AG04449 (cell line): ENCODE measurements at regions of chrX and their contacts with region 1.

Region 1: DNA sequence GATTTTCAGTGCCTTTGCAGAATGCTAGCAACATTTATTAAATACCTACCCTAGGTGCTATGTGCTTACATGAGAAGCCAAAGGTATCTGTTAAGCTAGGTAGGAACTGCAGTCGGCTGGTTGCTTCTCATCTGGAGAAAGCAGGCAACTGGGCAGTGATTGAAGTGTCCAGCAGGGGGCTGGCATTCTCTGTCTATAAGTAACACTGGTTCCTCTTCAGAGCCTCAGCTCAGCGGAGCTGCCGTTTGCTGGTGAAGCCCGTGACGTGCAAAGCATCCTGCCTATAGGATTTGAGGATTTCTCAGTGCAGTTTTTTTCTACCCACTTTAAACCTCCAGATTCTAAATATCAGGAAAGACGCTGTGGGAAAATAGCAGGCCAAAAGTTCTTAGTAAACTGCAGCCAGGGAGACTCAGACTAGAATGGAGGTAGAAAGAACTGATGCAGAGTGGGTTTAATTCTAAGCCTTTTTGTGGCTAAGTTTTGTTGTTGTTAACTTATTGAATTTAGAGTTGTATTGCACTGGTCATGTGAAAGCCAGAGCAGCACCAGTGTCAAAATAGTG is at the start of gene GRPR:
- DNase-seq: peak; percentile 58
- H3K4me3 ChIP-seq: peak within 1 kb of the TSS; percentile 19
- CTCF ChIP-seq: peak; percentile 64

Region 2: DNA sequence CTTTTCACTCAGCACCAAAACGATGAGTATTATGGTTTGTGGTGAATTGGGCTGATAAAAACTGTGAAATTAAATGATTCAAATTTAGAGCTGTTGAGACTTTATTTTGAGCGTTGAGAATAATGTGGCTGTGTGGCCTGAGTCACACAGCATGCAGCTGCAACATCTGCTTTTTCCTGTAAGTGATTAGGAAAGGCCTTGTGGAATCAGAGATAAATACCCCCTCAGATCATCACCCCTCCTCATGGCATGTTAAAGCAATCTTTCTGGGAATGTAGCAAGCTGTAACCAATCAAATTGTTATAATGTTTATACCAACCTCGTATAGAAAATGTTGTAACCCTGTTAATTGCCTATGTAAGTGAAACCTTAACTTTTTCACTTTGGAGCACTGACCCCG is 90.0 kb before region 1 on chrX:
- CTCF ChIA-PET with region 1: no interaction called
- POLR2A ChIA-PET with region 1: no interaction called
- DNase-seq: peak; percentile 44
- H3K4me3 ChIP-seq: no peak overlapping the region
- CTCF ChIP-seq: no peak

Region 3: DNA sequence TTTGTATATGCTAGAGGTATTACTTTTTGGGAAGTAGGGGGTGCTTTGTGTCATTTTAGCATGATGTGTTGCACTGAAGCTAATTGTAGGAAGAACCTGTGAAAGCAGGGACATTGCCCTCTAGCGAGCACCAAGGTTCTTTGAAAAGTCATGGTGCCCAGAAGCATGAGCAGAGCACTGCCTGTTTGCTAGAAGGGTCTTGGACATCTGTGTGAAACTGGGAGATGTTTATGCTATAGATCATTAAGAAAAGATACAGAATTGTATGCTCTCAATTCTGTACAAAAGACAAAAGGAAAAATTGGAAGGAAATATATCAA is 14.8 kb after region 1 on chrX:
- CTCF ChIA-PET with region 1: interaction called, 17 read pairs
- POLR2A ChIA-PET with region 1: no interaction called
- DNase-seq: no peak
- H3K4me3 ChIP-seq: no peak overlapping the region
- CTCF ChIP-seq: no peak

Region 4: GRCh38 chrX:16436348-16437188 is 313.3 kb after region 1 on chrX:
- CTCF ChIA-PET with region 1: interaction called, 12 read pairs
- POLR2A ChIA-PET with region 1: no interaction called
- DNase-seq: no peak
- H3K4me3 ChIP-seq: no peak overlapping the region
- CTCF ChIP-seq: peak; percentile 62

Region 5: GRCh38 chrX:16664074-16664473 is 540.8 kb after region 1 on chrX:
- CTCF ChIA-PET with region 1: interaction called, 21 read pairs
- POLR2A ChIA-PET with region 1: no interaction called
- DNase-seq: no peak
- H3K4me3 ChIP-seq: no peak overlapping the region
- CTCF ChIP-seq: no peak